ENCODE measurements at regions of chr4 and their contacts with region 1.

Region 1: DNA sequence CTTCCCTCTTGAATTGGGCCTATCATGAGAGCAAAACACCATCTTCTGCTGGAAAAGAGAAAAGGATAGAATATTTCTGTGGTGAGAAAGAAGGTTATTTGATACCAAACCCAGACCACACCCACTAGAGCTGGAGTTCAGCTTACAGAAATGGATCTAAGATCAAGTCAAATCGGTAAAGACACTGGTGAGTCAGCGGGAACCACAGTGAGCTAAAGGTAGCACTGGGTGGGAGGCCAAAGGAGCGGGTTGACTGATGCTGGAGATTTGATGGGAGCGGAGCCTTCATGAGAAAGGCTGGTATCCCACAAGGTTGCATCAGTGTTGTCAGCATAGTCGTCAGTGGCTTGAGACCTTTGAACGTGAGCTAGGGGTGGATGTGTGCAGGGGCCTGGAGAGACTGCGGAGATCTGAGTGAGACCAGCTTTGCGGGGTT is 106.4 kb upstream of the SCOC start:
- DNase-seq: peak; percentile 73 to 95
- H3K4me3 ChIP-seq: peak overlapping the region; percentile 55
- H3K27ac ChIP-seq: peak overlapping the region; percentile 99
- H3K4me1 ChIP-seq: peaks cover 30% of the 10 kb centered on the region
- H3K27me3 ChIP-seq: no peaks in the 10 kb centered on the region
- CTCF ChIP-seq: no peak

Region 2: GRCh38 chr4:140049024-140049848 is 217.8 kb before region 1 on chr4:
- CTCF ChIA-PET with region 1: no interaction called
- POLR2A ChIA-PET with region 1: interaction called, 4 read pairs
- intact Hi-C with region 1: loop called (anchors 5 kb)
- DNase-seq: peak; percentile 59 to 62
- H3K4me3 ChIP-seq: peak overlapping the region; percentile 56
- H3K27ac ChIP-seq: peak overlapping the region; percentile 96
- H3K4me1 ChIP-seq: peaks cover 62% of the 10 kb centered on the region
- H3K27me3 ChIP-seq: no peaks in the 10 kb centered on the region
- CTCF ChIP-seq: no peak

Region 3: GRCh38 chr4:140296335-140297220 is 29.6 kb after region 1 on chr4:
- CTCF ChIA-PET with region 1: no interaction called
- POLR2A ChIA-PET with region 1: interaction called, 6 read pairs
- intact Hi-C with region 1: loop called (anchors 1 kb)
- DNase-seq: peak; percentile 48 to 64
- H3K4me3 ChIP-seq: peak overlapping the region; percentile 43; the same call in 1 of the 2 replicates
- H3K27ac ChIP-seq: peak overlapping the region; percentile 83
- H3K4me1 ChIP-seq: peaks cover 37% of the 10 kb centered on the region
- H3K27me3 ChIP-seq: no peaks in the 10 kb centered on the region
- CTCF ChIP-seq: no peak

Region 4: DNA sequence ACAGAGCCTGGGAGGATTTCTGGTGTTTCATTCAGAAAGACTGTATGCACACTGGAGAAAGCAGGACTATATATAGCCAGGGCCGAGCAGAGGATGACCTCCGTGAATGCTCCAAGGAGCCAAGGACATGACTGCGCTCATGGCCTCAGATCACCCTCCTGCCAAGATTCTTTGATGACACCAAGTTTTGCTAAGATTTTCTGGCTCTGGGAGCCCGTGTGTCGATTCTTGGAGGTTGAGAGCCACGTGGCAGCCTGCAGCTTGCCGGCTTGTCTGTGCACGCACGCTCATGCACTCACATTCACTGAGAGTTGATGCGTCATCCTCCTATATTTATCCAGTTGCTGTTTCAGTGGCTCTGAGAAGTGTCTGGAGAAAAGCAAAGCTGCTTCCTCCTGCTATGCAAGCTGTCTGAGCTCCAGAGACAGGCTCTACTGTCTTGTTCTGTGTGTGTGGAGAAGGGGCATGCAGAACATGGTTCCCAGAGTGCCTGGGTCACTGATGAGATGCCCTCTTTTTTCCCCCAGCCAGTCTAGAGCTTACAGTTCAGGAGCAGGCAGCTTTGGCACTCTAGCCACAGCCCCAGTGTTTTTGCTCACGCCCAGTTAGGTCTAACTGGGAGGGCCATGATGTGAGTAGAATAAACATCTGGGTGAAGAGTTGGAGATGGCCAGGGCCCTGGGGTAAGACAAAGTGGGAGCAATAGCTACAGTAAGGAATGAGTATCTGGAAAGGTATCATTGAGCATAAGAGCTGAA is 41.5 kb after region 1 on chr4:
- CTCF ChIA-PET with region 1: interaction called, 3 read pairs
- POLR2A ChIA-PET with region 1: interaction called, 10 read pairs
- intact Hi-C with region 1: no loop called
- DNase-seq: peak in 1 of 2 experiments; percentile 21
- H3K4me3 ChIP-seq: no peak overlapping the region
- H3K27ac ChIP-seq: no peak overlapping the region
- H3K4me1 ChIP-seq: peaks cover 12% of the 10 kb centered on the region
- H3K27me3 ChIP-seq: no peaks in the 10 kb centered on the region
- CTCF ChIP-seq: no peak

Measured in PC-9 (cell line).